HepG2 (cell line): ENCODE measurements at regions of chr9 and their contacts with region 1.

Region 1: DNA sequence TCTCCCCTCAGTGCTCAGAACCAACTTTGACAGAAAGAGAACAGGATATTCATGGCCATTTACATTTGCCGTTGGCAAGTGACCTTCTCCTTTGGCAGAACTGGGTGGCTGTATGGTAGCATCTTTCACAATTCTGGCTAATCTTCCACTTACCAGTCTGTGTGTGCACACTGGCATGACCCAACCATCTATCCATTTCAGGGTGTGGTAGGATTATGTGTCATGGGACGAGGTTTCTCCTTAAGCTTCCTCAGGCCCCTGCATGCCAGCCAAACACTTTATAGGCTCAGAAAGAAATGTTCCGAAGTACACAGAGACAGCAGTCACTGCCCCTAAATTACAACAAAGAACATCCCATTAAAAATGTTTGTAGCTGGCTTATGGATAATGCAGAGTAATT is 497.1 kb downstream of the NFIB start:
- DNase-seq: no peak
- ATAC-seq: no peak
- H3K4me3 ChIP-seq: no peak overlapping the region
- H3K27ac ChIP-seq: no peak overlapping the region
- H3K4me1 ChIP-seq: no peaks in the 10 kb centered on the region
- H3K27me3 ChIP-seq: no peaks in the 10 kb centered on the region
- CTCF ChIP-seq: no peak
- EP300 ChIP-seq: no peak
- POLR2A ChIP-seq: no peak
- RAD21 ChIP-seq: no peak

Region 2: GRCh38 chr9:13841746-13842462 is 25.1 kb after region 1 on chr9:
- CTCF ChIA-PET with region 1: no interaction called
- POLR2A ChIA-PET with region 1: no interaction called
- in situ Hi-C with region 1: no loop called
- intact Hi-C with region 1: loop called (anchors 1 kb)
- DNase-seq: no peak
- ATAC-seq: no peak
- H3K4me3 ChIP-seq: no peak overlapping the region
- H3K27ac ChIP-seq: no peak overlapping the region
- H3K4me1 ChIP-seq: no peaks in the 10 kb centered on the region
- H3K27me3 ChIP-seq: no peaks in the 10 kb centered on the region
- CTCF ChIP-seq: no peak
- EP300 ChIP-seq: no peak
- POLR2A ChIP-seq: no peak
- RAD21 ChIP-seq: no peak